MCF 10A (cell line): ENCODE measurements at regions of chr10 and their contacts with region 1.

Region 1: DNA sequence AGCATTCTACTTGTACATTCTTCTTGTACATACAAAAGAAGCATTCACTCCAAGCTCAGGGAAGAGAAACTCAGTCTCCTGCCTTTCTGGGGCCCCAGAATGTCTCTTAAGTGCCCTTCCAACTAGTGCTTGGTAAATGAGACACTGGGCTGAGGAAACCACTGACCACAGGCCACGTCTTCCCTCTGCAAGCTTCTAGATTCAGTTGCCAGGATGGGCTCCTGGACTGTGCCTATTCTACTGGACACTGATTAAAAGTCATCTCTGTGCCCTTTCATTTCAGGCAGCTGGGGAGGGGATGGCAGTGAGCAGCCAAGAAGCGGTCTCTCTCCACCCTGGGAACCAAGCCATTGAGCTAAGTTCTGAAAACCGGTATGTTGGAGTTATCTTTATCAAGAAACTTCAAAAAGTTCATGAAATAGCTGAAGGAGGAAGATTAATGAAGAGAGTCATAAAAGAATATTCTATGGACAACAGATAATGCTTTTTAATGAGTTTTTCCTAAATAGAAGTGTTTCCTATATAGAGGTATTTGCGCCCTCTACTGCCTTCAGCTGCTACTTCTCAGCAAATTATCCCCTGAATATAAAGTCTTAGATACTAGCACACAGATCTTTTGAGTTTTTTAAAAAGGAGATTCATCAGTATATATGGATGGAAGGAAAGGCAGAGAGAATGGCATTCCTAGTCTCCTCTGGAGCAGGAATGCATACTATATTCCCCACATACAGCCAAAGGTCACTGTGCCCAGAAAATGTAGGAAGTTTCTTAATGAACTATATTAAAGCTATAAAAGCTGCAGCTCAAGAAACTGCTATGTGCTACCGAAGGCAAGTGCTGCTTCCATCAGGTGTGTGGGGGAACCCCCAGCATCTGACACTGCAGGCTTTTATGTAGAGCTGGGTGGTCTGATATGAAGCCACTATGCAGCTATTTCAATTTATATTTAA is 8.4 kb upstream of the IFIT1B start:
- DNase-seq: peak; percentile 51
- H3K4me3 Mint-ChIP-seq: no peak overlapping the region
- H3K27ac Mint-ChIP-seq: no peak overlapping the region
- H3K4me1 Mint-ChIP-seq: peaks cover 5% of the 10 kb centered on the region
- H3K27me3 Mint-ChIP-seq: no peaks in the 10 kb centered on the region
- CTCF ChIP-seq: peak; percentile 51

Region 2: DNA sequence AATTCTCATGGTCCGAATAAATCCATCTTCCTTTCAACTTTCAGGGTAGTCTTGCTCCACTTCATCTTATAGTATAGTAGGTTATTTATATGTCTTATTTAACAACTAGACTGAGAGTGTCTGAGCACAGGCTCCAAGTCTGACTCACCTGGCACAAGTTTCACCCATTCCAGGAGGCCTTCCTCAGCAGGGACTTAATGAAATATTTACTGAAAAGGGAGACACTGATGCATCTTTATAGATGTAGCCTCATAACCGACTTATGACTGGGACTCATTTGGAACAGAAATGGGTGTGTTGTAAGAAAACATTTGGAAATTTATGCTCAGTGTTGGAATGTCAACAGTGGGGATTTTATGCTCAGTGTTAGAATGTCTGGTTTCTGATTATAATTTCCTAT is 222.2 kb before region 1 on chr10:
- CTCF ChIA-PET with region 1: no interaction called
- POLR2A ChIA-PET with region 1: no interaction called
- intact Hi-C with region 1: no loop called
- DNase-seq: peak; percentile 71
- H3K4me3 Mint-ChIP-seq: no peak overlapping the region
- H3K27ac Mint-ChIP-seq: peak overlapping the region; percentile 39
- H3K4me1 Mint-ChIP-seq: peaks cover 16% of the 10 kb centered on the region
- H3K27me3 Mint-ChIP-seq: no peaks in the 10 kb centered on the region
- CTCF ChIP-seq: no peak

Region 3: GRCh38 chr10:89269433-89270152 is 99.8 kb before region 1 on chr10:
- CTCF ChIA-PET with region 1: interaction called, 18 read pairs
- POLR2A ChIA-PET with region 1: interaction called, 3 read pairs
- intact Hi-C with region 1: no loop called
- DNase-seq: no peak
- H3K4me3 Mint-ChIP-seq: no peak overlapping the region
- H3K27ac Mint-ChIP-seq: no peak overlapping the region
- H3K4me1 Mint-ChIP-seq: no peaks in the 10 kb centered on the region
- H3K27me3 Mint-ChIP-seq: no peaks in the 10 kb centered on the region
- CTCF ChIP-seq: no peak

Region 4: DNA sequence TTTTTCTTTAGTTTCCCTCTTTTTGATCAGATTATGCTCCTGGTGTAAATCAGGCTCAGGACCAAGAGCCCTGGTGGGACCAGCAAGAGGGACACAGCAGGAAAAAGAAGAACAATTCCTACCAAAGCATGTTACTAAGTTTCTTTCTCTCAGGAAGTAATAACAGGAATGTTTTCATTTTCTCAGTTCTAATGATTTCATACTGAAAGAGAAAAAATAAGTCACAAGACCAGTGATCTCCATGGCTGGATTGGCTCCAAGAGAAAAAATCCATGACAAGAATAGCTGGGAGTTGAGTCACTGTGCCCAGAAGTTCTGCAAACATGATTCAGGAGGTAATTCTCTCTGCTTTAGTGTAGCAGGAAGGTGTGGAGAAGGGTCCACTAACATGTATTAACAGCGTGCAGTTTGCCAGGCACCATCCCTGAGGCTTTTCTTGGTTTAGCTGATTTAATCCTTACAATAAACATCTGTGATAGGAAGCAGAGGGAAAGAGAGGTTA is 91.3 kb before region 1 on chr10:
- CTCF ChIA-PET with region 1: interaction called, 18 read pairs
- POLR2A ChIA-PET with region 1: interaction called, 5 read pairs
- intact Hi-C with region 1: no loop called
- DNase-seq: peak; percentile 98
- H3K4me3 Mint-ChIP-seq: peak overlapping the region; percentile 62
- H3K27ac Mint-ChIP-seq: peak overlapping the region; percentile 100
- H3K4me1 Mint-ChIP-seq: peaks cover 53% of the 10 kb centered on the region
- H3K27me3 Mint-ChIP-seq: no peaks in the 10 kb centered on the region
- CTCF ChIP-seq: no peak

Region 5: GRCh38 chr10:89296220-89296648 is 73.2 kb before region 1 on chr10:
- CTCF ChIA-PET with region 1: interaction called, 14 read pairs
- POLR2A ChIA-PET with region 1: interaction called, 9 read pairs
- intact Hi-C with region 1: loop called (anchors 1 kb)
- DNase-seq: peak; percentile 77
- H3K4me3 Mint-ChIP-seq: no peak overlapping the region
- H3K27ac Mint-ChIP-seq: peak overlapping the region; percentile 82
- H3K4me1 Mint-ChIP-seq: peaks cover 20% of the 10 kb centered on the region
- H3K27me3 Mint-ChIP-seq: no peaks in the 10 kb centered on the region
- CTCF ChIP-seq: no peak

Region 6: DNA sequence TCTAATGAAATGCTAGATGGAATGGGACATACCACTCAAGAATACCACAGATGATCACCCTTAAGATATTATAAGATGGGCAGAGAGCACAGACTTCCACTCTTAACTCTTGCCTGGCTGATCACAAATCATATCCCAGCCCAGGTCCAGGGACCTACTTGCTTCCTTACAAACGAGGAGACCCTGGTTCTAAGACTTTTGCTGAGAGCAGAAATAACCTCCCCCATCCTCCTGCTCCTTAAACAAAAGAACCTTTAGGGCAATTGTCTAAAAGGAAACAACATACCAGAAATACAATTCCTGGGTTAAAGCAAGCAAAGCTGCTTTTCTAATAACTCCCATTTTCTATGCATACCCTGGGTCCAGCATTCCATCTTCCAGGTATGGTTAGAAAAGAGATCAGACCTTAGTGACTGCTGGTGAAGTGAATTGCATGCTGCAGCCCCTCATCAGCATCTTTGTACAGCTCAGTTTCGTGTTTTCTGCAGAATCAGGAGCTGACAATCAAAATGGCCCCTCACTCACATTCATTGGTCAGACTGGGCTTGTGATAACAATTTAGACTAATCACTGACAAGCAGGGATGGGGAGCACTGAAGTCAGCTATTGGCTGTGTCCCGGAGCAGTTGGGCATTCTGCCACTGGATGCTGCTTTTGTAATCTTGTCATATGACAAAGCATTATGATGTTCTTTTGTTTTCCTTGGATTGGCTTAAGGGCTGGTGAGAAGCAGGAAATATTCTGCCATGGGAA is 27.0 kb before region 1 on chr10:
- CTCF ChIA-PET with region 1: interaction called, 14 read pairs
- POLR2A ChIA-PET with region 1: interaction called, 5 read pairs
- intact Hi-C with region 1: no loop called
- DNase-seq: peak; percentile 81
- H3K4me3 Mint-ChIP-seq: no peak overlapping the region
- H3K27ac Mint-ChIP-seq: no peak overlapping the region
- H3K4me1 Mint-ChIP-seq: peaks cover 36% of the 10 kb centered on the region
- H3K27me3 Mint-ChIP-seq: no peaks in the 10 kb centered on the region
- CTCF ChIP-seq: no peak

Region 7: DNA sequence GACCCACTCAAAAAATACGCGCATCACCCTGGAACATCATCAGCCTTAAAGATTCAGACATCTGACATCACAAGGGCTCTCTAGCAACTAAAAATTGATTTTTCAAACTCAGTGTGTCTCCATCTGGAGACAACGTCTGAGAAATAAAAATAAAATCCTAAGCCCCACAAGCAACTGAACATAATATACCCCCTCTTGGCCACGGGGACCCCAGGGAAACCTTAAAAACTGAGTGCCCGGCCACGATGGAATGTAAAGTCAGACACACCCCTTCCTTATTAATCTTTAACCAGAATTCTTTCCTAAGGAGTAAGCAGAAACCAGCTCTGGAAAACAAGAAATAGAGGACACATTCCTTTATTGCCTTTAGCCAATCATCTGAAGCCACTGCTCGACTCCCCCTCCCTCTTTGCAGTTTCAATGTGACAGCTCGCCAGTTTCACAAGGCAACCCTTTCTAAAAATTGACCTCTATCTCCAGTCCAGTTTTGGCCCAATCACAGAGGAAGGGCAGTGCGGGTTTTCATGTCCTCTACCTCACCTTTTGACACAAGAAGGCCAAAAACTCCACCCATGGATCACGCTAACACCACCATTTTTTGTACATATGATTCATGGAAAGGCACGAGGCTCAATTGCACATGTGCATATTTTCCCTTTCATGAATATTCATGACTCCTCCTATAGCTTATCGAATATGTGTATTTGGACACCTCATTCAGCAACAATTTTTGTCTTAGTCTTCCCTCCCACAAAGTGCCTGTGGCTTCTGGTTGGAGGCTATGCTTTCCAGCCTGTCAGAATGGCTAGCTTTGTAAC is 17.4 kb before region 1 on chr10:
- CTCF ChIA-PET with region 1: interaction called, 40 read pairs
- POLR2A ChIA-PET with region 1: interaction called, 10 read pairs
- intact Hi-C with region 1: no loop called
- DNase-seq: peak; percentile 82
- H3K4me3 Mint-ChIP-seq: peak overlapping the region; percentile 66
- H3K27ac Mint-ChIP-seq: peak overlapping the region; percentile 98
- H3K4me1 Mint-ChIP-seq: peaks cover 30% of the 10 kb centered on the region
- H3K27me3 Mint-ChIP-seq: no peaks in the 10 kb centered on the region
- CTCF ChIP-seq: no peak

Region 8: GRCh38 chr10:89391917-89392756 is 22.7 kb after region 1 on chr10 and contains the start of gene IFIT1:
- CTCF ChIA-PET with region 1: interaction called, 5 read pairs
- POLR2A ChIA-PET with region 1: interaction called, 15 read pairs
- intact Hi-C with region 1: no loop called
- DNase-seq: peak; percentile 85
- H3K4me3 Mint-ChIP-seq: peak within 1 kb of the TSS; percentile 77
- H3K27ac Mint-ChIP-seq: peak within 1 kb of the TSS; percentile 68
- H3K4me1 Mint-ChIP-seq: no peaks in the 10 kb centered on the region
- H3K27me3 Mint-ChIP-seq: no peaks in the 10 kb centered on the region
- CTCF ChIP-seq: no peak
- total RNA-seq, gene IFIT1: 0.17 and 0.26 TPM in 2 replicates